ENCODE measurements at regions of chr4 and their contacts with region 1.

Region 1: DNA sequence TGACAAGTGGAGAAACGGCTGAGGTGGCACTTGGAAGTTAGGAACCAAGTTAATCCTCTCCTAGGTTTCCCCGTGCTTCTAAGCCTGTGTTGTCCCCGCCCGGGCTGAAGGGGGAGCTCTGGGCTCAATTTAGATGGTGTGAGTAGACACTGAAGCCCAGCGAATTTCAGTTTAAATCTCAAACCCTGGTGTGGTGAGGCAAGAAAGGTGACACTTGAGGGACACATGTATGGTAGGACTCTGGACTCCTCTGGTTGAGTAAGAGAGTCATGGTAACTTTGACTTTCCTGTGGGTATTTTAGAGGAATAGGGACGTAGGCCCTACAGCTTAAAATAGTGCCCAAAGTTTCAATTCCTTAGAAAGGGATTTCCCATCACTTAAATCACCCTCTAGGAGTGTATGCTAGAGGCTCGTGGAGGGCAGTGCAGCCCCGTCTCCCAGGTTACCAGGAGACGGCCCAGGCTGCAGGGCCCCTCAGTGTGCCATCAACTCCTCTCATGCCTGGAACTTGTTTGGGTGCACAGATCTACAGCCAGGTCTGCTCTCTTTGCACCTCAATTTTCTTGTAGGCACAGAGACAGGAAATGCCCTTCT is 24.0 kb downstream of the HAND2 start:
- DNase-seq: peak; percentile 34
- H3K4me3 ChIP-seq: no peak overlapping the region
- H3K27ac ChIP-seq: no peak overlapping the region
- H3K4me1 ChIP-seq: no peaks in the 10 kb centered on the region
- CTCF ChIP-seq: peak; percentile 87

Region 2: DNA sequence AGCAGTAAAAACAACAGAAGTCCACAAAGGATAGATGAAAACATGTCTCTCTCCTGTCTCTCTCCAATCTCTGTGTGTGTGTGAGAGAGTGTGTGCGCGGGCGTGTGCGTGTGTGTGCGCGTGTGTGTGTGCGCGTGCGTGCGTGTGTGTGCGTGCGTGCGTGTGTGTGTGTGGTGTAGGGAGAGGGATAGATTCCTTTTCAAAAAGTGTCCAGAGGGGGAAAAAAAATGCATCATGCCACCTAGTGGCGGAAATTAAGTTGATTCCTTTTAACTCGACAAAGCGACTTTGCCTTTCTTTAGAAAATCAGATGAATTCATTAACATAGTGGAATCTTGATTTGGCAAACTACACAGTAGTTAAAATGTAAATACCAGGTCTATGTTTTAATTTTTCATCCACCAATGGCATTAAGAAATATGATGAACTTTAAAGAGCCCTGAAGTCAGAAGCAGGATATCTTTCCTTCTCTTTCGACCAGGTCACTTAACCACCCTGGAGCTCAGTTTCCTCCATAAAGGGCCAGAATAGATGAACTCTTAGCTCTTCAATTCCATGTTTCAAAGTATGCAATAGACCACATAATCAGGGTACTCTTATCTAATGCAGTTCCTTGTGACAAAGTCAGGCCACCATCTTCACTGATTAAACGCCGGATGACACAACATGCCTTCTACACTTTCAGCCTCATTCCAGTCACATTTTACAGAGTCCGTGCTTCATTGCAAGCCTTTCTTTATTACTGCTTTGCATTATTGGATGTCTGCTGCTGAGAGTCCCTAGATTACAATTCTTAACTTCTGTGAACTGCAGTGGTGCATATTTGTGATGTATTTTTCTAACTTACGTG is 614.6 kb after region 1 on chr4:
- CTCF ChIA-PET with region 1: no interaction called
- POLR2A ChIA-PET with region 1: no interaction called
- intact Hi-C with region 1: loop called (anchors 10 kb)
- DNase-seq: peak; percentile 50
- H3K4me3 ChIP-seq: no peak overlapping the region
- H3K27ac ChIP-seq: no peak overlapping the region
- H3K4me1 ChIP-seq: no peaks in the 10 kb centered on the region
- CTCF ChIP-seq: peak; percentile 76

Region 3: GRCh38 chr4:174318829-174319764 is 813.1 kb after region 1 on chr4:
- CTCF ChIA-PET with region 1: no interaction called
- POLR2A ChIA-PET with region 1: no interaction called
- intact Hi-C with region 1: loop called (anchors 5 kb)
- DNase-seq: peak; percentile 50
- H3K4me3 ChIP-seq: no peak overlapping the region
- H3K27ac ChIP-seq: no peak overlapping the region
- H3K4me1 ChIP-seq: no peaks in the 10 kb centered on the region
- CTCF ChIP-seq: peak; percentile 97